ENCODE measurements at regions of chr7 and their contacts with region 1.

Region 1: DNA sequence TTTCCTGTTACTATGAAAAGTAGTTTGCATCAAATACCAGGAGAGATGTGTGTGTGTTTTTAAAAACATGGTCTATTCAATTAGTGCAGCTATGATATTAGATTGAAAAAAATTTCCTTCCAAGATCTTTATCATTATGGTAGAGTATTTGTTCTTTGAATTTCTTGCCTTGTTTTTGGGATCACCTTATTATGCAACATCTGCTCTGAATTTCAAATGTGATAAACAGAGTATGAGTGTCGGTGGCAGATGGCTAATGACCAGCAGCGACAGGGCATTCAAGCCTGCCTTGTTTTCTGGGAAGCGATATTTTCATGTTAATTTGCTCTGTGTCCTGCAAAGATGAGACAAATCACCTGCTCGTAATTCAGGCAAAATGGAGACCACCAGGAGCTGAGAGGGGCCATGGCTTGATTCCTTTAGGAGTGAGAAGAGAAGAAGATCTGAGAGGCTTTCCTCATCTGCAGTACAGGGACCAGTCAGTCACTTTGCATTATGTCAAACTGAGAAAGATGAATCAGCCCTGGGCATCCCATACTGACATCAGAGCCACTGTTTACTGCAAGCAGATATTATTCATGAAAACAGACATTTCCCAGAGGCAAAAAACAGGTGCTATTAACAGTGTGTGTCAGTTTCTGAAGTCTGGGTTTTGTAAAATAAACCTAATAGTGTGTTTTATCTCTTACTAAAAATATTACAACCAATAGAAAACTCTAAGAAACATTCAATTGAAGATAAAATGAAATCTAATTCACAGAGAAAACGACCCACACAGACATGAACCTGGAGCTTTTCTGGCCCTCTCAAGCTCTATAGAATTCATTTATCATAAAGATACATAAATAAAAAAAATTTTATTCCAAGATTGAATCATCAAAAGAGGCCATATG is 67.6 kb downstream of the CDK6 start:
- DNase-seq: peak; percentile 29
- ATAC-seq: no peak; the same call in 1 of the 2 replicates
- H3K4me3 ChIP-seq: no peak overlapping the region
- H3K27ac ChIP-seq: no peak overlapping the region
- H3K4me1 ChIP-seq: peaks cover 46% of the 10 kb centered on the region
- H3K27me3 ChIP-seq: no peaks in the 10 kb centered on the region
- CTCF ChIP-seq: no peak

Region 2: GRCh38 chr7:92691578-92691977 is 77.2 kb before region 1 on chr7:
- CTCF ChIA-PET with region 1: interaction called, 3 read pairs
- POLR2A ChIA-PET with region 1: no interaction called
- intact Hi-C with region 1: loop called (anchors 2 kb)
- DNase-seq: peak; percentile 81
- ATAC-seq: peak; percentile 77
- H3K4me3 ChIP-seq: no peak overlapping the region
- H3K27ac ChIP-seq: no peak overlapping the region
- H3K4me1 ChIP-seq: peaks cover 14% of the 10 kb centered on the region
- H3K27me3 ChIP-seq: no peaks in the 10 kb centered on the region
- CTCF ChIP-seq: peak; percentile 81

Region 3: GRCh38 chr7:92717993-92718716 is 50.6 kb before region 1 on chr7:
- CTCF ChIA-PET with region 1: interaction called, 3 read pairs
- POLR2A ChIA-PET with region 1: no interaction called
- intact Hi-C with region 1: loop called (anchors 1 kb)
- DNase-seq: peak; percentile 70
- ATAC-seq: peak; percentile 84
- H3K4me3 ChIP-seq: peak overlapping the region; percentile 64
- H3K27ac ChIP-seq: peak overlapping the region; percentile 86
- H3K4me1 ChIP-seq: peaks cover 16% of the 10 kb centered on the region
- H3K27me3 ChIP-seq: no peaks in the 10 kb centered on the region
- CTCF ChIP-seq: no peak

Region 4: DNA sequence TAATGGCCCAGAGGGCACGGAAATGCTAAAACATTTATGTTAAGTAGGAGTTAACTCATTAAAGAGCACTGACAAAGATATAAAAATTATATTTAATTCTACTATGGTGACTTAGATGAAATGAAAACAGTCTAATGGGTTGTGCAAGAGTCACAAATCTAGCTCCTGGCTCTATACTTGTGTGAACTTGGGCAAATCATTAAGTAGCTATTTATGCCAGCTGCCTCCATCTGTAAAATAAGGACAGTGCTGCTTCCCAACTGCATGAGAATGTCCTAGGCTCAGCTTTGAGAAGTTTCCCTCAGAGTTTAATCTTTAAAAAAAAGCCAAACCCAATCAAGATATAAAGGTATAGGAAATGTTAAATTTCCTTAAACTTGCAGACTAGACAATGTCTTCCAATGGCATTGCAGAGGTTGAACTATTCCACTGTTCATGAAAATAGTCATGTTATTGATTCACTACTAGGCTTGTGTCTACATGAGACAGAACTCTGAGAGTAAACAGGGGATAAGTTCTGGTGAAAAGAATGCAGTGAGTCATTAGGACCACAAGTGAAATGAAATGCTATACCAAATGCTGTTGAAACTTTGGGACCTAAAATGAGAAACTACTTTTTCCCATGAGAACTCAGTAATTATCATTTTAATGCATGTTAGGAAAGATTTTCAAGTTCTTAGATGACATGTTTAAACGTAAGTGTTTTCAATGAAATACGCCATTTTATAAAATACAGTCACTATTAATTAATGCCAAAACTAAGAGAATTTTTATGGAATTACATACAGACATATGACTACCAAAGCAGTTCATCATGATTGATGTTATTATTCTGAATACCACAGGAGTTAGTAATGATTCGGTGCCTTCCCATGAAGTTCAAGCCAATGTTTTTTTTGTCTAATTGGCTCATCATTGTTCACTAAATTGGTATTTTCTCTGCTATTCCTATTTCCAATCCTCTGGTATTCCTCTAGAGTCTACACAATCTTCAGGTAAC is 16.5 kb before region 1 on chr7:
- CTCF ChIA-PET with region 1: no interaction called
- POLR2A ChIA-PET with region 1: no interaction called
- intact Hi-C with region 1: loop called (anchors 1 kb)
- DNase-seq: peak; percentile 88
- ATAC-seq: peak; percentile 94
- H3K4me3 ChIP-seq: peak overlapping the region; percentile 26; the same call in 1 of the 2 replicates
- H3K27ac ChIP-seq: peak overlapping the region; percentile 91
- H3K4me1 ChIP-seq: peaks cover 56% of the 10 kb centered on the region
- H3K27me3 ChIP-seq: no peaks in the 10 kb centered on the region
- CTCF ChIP-seq: no peak

Region 5: GRCh38 chr7:92781117-92781720 is 12.5 kb after region 1 on chr7:
- CTCF ChIA-PET with region 1: no interaction called
- POLR2A ChIA-PET with region 1: interaction called, 6 read pairs
- intact Hi-C with region 1: loop called (anchors 2 kb)
- DNase-seq: peak; percentile 29
- ATAC-seq: peak; percentile 58
- H3K4me3 ChIP-seq: no peak overlapping the region
- H3K27ac ChIP-seq: no peak overlapping the region
- H3K4me1 ChIP-seq: peaks cover 23% of the 10 kb centered on the region
- H3K27me3 ChIP-seq: no peaks in the 10 kb centered on the region
- CTCF ChIP-seq: no peak

Region 6: GRCh38 chr7:92916674-92917224 is 148.0 kb after region 1 on chr7:
- CTCF ChIA-PET with region 1: no interaction called
- POLR2A ChIA-PET with region 1: no interaction called
- intact Hi-C with region 1: loop called (anchors 10 kb)
- DNase-seq: peak; percentile 84
- ATAC-seq: peak; percentile 98
- H3K4me3 ChIP-seq: no peak overlapping the region
- H3K27ac ChIP-seq: peak overlapping the region; percentile 36
- H3K4me1 ChIP-seq: peaks cover 16% of the 10 kb centered on the region
- H3K27me3 ChIP-seq: no peaks in the 10 kb centered on the region
- CTCF ChIP-seq: no peak

Measured in PC-3 (cell line).